Left lung (tissue), 14 donors: ENCODE measurements at regions of chr15 and their contacts with region 1.

Region 1: DNA sequence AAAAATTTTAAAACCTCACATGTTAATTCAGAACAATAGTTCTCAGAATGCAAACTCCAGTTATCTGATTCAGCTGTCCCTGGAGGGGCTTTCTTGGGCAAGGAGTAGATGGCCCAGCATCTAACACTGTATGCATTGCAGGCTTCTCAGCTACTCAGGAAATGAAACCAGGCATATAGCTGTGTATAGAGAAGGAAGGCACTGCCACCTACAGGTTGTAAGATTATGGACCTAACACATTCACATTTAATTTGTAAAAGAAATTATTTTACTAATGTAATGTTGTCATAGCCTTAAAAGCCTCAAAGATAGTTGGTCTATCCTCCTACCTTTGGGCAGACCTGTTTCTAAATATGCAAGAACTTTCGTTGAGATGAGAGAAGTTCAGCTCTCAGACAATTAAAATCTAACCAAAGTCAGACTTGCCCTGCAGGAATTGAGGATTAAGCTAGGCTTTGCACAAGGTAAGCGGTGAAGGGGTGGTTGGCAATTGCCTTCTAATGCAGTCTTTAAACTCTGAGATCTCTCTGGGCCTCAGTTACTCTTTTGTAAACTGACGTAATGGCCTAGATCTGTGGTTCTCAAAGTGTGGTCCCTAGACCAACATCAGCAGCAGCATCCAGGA is 132.8 kb upstream of the SLC24A5 start:
- DNase-seq: peak in 2 of 4 donors; percentile 51 to 74
- ATAC-seq: peak; percentile 97
- H3K4me3 ChIP-seq: no peak overlapping the region
- H3K27ac ChIP-seq: no peak overlapping the region
- H3K4me1 ChIP-seq: peaks cover 0 to 3% of the 10 kb centered on the region in 2 donors
- H3K27me3 ChIP-seq: no peaks in the 10 kb centered on the region
- CTCF ChIP-seq: peak; percentile 40 to 69

Region 2: GRCh38 chr15:47196057-47196456 is 792.0 kb before region 1 on chr15:
- intact Hi-C with region 1: loop called in 1 of 2 experiments (anchors 5 kb)
- DNase-seq: peak; percentile 75 to 93 (median 80)
- ATAC-seq: peak; percentile 100
- H3K4me3 ChIP-seq: no peak overlapping the region
- H3K27ac ChIP-seq: no peak overlapping the region
- H3K4me1 ChIP-seq: no peaks in the 10 kb centered on the region
- H3K27me3 ChIP-seq: no peaks in the 10 kb centered on the region
- CTCF ChIP-seq: peak; percentile 67 to 74

Region 3: DNA sequence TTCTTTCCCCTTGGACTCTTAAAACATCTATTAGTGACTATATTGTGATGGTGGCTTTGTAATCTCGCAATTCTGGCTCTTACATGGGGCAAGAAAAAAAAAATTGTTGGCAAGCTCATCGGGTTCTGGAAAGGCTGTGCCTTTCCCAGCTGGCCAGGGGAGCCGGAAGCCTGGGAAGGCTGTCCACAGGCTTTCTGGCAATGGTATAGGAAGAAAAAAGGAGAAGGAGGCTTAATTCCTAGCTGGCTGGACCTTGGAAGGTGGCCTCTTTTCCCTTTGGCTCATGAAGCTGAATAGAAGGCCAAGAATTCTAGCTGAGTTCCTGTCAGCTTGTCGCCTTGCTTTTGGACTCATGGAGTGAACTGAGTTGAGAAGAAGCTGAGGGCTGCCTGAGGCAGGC is 514.2 kb before region 1 on chr15:
- intact Hi-C with region 1: loop called in 1 of 2 experiments (anchors 10 kb)
- DNase-seq: peak in 2 of 4 donors; percentile 81 to 88
- ATAC-seq: peak; percentile 56
- H3K4me3 ChIP-seq: no peak overlapping the region
- H3K27ac ChIP-seq: peak overlapping the region in 1 of 2 donors; percentile 19
- H3K4me1 ChIP-seq: no peaks in the 10 kb centered on the region
- H3K27me3 ChIP-seq: no peaks in the 10 kb centered on the region
- CTCF ChIP-seq: no peak

Region 4: DNA sequence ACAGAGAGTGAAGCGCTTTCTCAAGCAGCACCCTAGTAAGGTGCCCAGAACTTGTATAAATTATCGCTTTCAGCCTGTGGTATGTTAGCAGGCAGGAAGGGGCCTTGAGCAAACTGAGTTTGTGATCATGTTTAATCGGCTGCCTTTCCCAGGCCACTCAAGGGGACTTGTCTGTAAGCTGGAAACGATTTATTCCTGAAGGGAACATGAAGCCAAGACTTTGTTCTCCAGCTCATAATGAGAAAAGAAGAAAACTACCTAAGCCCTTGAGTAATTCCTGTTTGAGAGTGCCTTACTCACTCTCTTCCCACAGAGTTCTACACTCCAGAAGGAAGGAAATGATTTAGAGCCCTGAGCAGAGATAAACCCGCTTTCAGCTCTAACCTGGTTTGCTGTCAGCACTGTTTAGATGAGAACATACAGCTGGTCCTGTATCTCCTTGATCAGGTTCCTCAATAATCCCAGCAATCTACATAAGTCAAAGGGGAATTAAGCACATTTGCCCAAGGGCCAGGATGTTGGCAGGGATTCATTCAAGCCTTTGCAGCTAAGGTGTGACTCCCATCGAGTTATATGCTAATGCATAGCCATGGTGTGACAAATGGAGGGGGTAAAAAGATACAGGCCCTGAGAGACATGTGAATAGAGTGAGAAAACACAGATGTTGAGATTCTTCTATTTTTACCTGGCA is 54.9 kb before region 1 on chr15:
- intact Hi-C with region 1: no loop called
- DNase-seq: no peak
- ATAC-seq: no peak
- H3K4me3 ChIP-seq: no peak overlapping the region
- H3K27ac ChIP-seq: no peak overlapping the region
- H3K4me1 ChIP-seq: no peaks in the 10 kb centered on the region
- H3K27me3 ChIP-seq: no peaks in the 10 kb centered on the region
- CTCF ChIP-seq: no peak